PC-3 (cell line): ENCODE measurements at regions of chr12 and their contacts with region 1.

Region 1: DNA sequence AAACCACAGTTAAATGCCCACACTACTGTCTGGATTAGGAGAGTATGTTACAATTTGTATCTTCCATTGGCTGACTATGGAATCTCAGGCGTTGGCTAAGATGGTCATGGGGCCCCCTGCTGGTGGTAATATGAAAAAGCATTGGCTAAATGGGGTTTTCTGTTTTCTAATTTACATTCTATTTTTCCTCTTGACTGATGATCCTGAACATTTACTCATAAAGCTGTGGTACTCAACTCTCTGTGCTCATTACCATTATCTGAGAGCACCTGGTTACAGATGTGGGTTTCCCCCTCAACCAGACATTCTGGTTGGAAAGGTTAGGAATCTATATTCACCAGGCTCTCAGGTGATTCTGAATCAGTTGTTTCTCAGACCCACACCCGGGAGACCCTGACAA is 64.8 kb downstream of the WSCD2 start:
- DNase-seq: peak; percentile 36
- ATAC-seq: no peak
- H3K4me3 ChIP-seq: no peak overlapping the region
- H3K27ac ChIP-seq: no peak overlapping the region
- H3K4me1 ChIP-seq: no peaks in the 10 kb centered on the region
- H3K27me3 ChIP-seq: 0 out of 2 replicates have a peak, but pooled peaks cover 6% of the 10 kb centered on the region
- CTCF ChIP-seq: peak; percentile 82

Region 2: DNA sequence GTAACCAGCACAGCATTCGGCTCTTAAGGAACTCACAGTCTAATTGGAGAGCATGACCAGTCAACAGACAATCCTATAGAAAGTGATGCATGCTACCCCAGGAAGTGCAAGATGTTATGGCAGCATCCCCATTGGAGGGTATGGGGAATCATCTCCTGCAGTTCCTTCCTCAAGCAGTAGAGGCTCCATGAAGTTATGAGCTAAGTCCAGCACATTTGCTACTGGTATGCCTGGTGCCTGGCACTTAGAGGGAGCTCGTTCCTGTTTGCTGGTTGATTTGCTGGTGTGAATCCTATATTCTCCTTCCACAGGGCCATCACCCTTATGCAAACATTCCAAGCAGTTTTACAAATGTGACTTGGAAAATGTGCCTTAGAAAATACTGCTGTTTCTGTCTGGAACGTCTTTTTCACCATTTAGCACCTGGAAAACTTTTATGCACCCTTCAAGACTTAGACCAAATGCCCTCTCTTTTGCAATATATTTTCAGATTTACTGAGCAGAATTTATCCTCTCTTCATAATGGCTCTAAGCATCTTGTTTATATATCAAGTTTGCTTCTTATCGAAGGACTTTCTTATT is 201.0 kb before region 1 on chr12:
- CTCF ChIA-PET with region 1: no interaction called
- POLR2A ChIA-PET with region 1: no interaction called
- intact Hi-C with region 1: loop called (anchors 10 kb)
- DNase-seq: peak; percentile 66
- ATAC-seq: peak; percentile 78
- H3K4me3 ChIP-seq: no peak overlapping the region
- H3K27ac ChIP-seq: no peak overlapping the region
- H3K4me1 ChIP-seq: no peaks in the 10 kb centered on the region
- H3K27me3 ChIP-seq: peaks cover 12% of the 10 kb centered on the region; the same call in 1 of the 2 replicates
- CTCF ChIP-seq: peak; percentile 69

Region 3: DNA sequence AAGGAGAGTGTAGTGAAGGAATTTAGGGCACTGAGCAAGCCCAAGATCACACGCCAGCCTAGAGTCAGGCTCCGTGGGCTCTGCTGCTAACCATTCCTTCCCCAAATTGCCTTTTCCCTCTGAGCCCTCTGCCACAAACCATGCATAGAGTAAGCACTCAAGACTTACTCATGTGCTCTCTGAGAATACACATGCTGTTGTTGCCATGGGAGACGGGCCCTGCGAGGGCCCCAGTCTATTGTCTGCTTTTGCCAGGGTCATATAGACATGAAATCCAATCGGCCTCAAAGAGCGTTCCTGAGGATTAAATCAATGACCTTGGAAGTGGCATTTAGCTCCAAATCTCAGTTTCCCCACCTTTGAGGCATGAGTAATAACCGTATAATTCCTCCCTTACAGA is 113.6 kb before region 1 on chr12:
- CTCF ChIA-PET with region 1: no interaction called
- POLR2A ChIA-PET with region 1: no interaction called
- intact Hi-C with region 1: no loop called
- DNase-seq: no peak
- ATAC-seq: no peak
- H3K4me3 ChIP-seq: no peak overlapping the region
- H3K27ac ChIP-seq: no peak overlapping the region
- H3K4me1 ChIP-seq: no peaks in the 10 kb centered on the region
- H3K27me3 ChIP-seq: peaks cover 20% of the 10 kb centered on the region
- CTCF ChIP-seq: no peak

Region 4: GRCh38 chr12:108146035-108146893 is 47.7 kb before region 1 on chr12:
- CTCF ChIA-PET with region 1: no interaction called
- POLR2A ChIA-PET with region 1: no interaction called
- intact Hi-C with region 1: no loop called
- DNase-seq: no peak
- ATAC-seq: no peak
- H3K4me3 ChIP-seq: no peak overlapping the region
- H3K27ac ChIP-seq: no peak overlapping the region
- H3K4me1 ChIP-seq: no peaks in the 10 kb centered on the region
- H3K27me3 ChIP-seq: peaks cover 74% of the 10 kb centered on the region
- CTCF ChIP-seq: no peak

Region 5: DNA sequence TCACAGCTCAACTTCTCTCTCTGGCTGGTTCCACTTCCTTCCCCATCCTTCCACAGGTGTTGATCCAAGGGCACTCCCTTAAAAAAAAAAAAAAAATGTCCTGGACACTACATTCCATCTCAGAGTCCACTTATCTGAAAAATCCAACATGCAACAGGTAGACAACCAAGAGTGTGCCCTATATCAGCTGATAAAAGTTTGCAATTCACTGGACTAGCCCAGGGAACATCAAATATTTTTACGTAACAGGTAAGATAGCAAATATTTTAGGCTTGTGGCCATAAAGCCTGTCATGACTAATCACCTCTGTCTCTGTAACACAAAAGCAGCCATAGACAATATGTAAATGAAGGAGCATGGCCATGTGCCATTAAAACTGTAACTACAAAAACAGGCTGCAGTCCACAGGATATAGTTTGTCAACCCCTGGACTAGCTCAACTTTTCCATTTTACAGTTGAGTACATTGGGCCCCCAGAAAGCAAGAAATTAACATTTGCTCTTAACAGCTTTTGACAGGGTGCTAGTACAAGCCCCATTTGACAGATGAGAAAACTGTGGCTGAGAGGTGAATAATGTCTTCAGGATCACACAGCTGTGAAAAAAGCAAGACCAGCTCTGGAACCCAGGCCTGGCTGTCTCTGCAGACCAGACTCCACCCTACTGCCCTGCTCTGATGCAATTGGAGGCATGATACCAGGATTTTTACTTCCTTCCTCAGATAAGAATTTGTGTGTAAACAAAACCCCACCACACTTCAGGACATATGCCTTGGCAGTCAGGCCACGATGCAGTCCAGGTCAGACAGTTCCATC is 76.3 kb after region 1 on chr12:
- CTCF ChIA-PET with region 1: no interaction called
- POLR2A ChIA-PET with region 1: no interaction called
- intact Hi-C with region 1: no loop called
- DNase-seq: no peak
- ATAC-seq: no peak
- H3K4me3 ChIP-seq: no peak overlapping the region
- H3K27ac ChIP-seq: no peak overlapping the region
- H3K4me1 ChIP-seq: no peaks in the 10 kb centered on the region
- H3K27me3 ChIP-seq: 0 out of 2 replicates have a peak, but pooled peaks cover 1% of the 10 kb centered on the region
- CTCF ChIP-seq: no peak